ENCODE measurements at regions of chr19 and their contacts with region 1.

Region 1: DNA sequence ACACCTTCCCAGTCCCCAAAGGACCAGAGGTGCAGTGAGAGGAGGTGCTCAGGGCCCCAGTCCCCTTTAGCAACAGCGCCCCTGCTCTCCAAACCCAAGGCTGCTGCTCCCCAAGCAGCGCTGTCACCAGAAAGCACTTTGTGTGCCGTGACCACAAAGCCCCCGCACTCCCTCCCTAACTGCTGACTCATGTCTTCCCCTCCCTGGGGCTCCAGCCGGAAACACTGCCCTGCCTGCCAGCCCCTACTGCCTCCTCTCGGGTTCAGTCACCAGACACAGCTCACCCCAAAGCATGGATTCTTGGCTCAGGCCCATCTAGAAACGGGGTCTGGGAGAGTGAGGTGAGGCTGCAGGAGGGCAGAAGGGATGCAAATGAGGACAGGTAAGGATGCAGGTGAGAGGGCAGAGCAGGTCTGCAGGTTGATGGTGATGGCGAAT is 4.9 kb upstream of the TNFSF14 start:
- DNase-seq: peak; percentile 90
- H3K4me3 Mint-ChIP-seq: peak overlapping the region; percentile 72
- H3K27ac Mint-ChIP-seq: peak overlapping the region; percentile 89
- H3K4me1 Mint-ChIP-seq: peaks cover 61% of the 10 kb centered on the region
- H3K27me3 Mint-ChIP-seq: no peaks in the 10 kb centered on the region

Region 2: GRCh38 chr19:6639439-6639838 is 35.4 kb before region 1 on chr19:
- intact Hi-C with region 1: loop called (anchors 1 kb)
- DNase-seq: no peak
- H3K4me3 Mint-ChIP-seq: no peak overlapping the region
- H3K27ac Mint-ChIP-seq: peak overlapping the region; percentile 45
- H3K4me1 Mint-ChIP-seq: peaks cover 37% of the 10 kb centered on the region
- H3K27me3 Mint-ChIP-seq: no peaks in the 10 kb centered on the region

Region 3: DNA sequence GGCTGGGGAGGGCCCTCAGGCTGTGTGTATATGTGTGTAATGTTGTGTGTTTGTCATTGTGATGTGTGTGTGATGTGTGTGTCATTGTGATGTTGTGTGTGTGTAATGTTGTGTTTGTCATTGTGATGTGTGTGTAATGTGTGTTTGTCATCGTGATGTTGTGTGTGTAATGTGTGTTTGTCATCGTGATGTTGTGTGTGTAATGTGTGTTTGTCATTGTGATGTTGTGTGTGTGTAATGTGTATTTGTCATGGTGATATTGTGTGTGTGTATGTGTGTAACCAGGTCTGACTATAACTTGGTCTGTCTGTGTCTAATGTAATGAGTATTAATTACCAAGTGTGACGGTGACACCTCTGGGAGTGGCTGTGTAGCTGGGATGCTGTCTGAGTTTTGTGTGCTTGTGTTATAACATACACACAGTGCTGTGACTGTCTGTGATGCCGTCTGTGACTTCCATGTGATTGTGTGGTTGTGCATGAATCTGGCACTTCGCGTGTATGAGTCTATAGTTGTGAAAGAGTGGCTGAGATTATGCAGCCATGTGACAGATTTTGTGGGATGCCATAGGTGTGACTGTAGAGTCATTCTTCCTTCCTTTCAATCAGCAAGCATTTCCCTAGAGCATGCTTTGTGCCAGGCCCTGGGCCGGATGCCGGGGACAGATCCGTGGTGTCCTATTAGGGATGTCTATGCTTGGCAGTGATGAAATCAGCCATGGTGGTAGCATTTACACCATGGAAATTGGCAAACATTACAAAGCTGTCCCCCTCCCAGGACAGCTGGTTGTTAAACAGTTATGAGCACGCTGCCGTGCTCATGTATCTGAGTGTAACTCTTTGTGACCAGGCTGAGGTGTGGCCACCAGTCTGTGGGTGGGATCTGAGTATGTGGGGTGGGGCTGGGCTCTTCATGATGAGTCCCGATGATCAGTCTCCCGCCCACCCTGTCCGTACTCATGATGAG is 11.4 kb before region 1 on chr19:
- intact Hi-C with region 1: loop called (anchors 1 kb)
- DNase-seq: no peak
- H3K4me3 Mint-ChIP-seq: no peak overlapping the region
- H3K27ac Mint-ChIP-seq: no peak overlapping the region
- H3K4me1 Mint-ChIP-seq: peaks cover 43% of the 10 kb centered on the region
- H3K27me3 Mint-ChIP-seq: no peaks in the 10 kb centered on the region

Region 4: GRCh38 chr19:6737284-6738046 is 62.6 kb after region 1 on chr19 and contains the start of gene GPR108:
- intact Hi-C with region 1: loop called (anchors 1 kb)
- DNase-seq: peak; percentile 100
- H3K4me3 Mint-ChIP-seq: peak within 1 kb of the TSS; percentile 98
- H3K27ac Mint-ChIP-seq: peak within 1 kb of the TSS; percentile 98
- H3K4me1 Mint-ChIP-seq: peaks cover 37% of the 10 kb centered on the region
- H3K27me3 Mint-ChIP-seq: no peaks in the 10 kb centered on the region
- total RNA-seq, gene GPR108: 90.4 and 95.4 TPM in 2 replicates

Region 5: GRCh38 chr19:6750062-6750461 is 75.2 kb after region 1 on chr19:
- intact Hi-C with region 1: no loop called
- DNase-seq: no peak
- H3K4me3 Mint-ChIP-seq: no peak overlapping the region
- H3K27ac Mint-ChIP-seq: no peak overlapping the region
- H3K4me1 Mint-ChIP-seq: peaks cover 3% of the 10 kb centered on the region
- H3K27me3 Mint-ChIP-seq: no peaks in the 10 kb centered on the region

Measured in activated T-helper 2 cell treated with anti-CD3 and anti-CD28 coated beads, Interferon-gamma antibody, Interleukin-2, Interleukin-4, amounts not matched to agents 10 μg/mL and 5 μg/mL and 100 μg/mL, durations not matched to agents 14 hours and 24 hours and 36 hours (primary cell).